ENCODE measurements at regions of chr17 and their contacts with region 1.

Region 1: GRCh38 chr17:29111816-29112499 is 68.2 kb downstream of the MYO18A start:
- DNase-seq: peak; percentile 62
- ATAC-seq: peak; percentile 85
- H3K4me3 Mint-ChIP-seq: no peak overlapping the region
- H3K27ac Mint-ChIP-seq: no peak overlapping the region
- H3K4me1 Mint-ChIP-seq: peaks cover 4% of the 10 kb centered on the region
- H3K27me3 Mint-ChIP-seq: no peaks in the 10 kb centered on the region
- CTCF ChIP-seq: peak; percentile 31

Region 2: GRCh38 chr17:28967221-28968140 is 144.5 kb before region 1 on chr17:
- CTCF ChIA-PET with region 1: interaction called, 149 read pairs
- POLR2A ChIA-PET with region 1: interaction called, 8 read pairs
- intact Hi-C with region 1: loop called (anchors 1 kb)
- DNase-seq: no peak
- ATAC-seq: no peak
- H3K4me3 Mint-ChIP-seq: no peak overlapping the region
- H3K27ac Mint-ChIP-seq: peak overlapping the region; percentile 68
- H3K4me1 Mint-ChIP-seq: peaks cover 8% of the 10 kb centered on the region
- H3K27me3 Mint-ChIP-seq: peaks cover 16% of the 10 kb centered on the region
- CTCF ChIP-seq: no peak

Region 3: GRCh38 chr17:30869005-30869404 is 1757.0 kb after region 1 on chr17:
- CTCF ChIA-PET with region 1: no interaction called
- POLR2A ChIA-PET with region 1: no interaction called
- intact Hi-C with region 1: no loop called
- DNase-seq: no peak
- ATAC-seq: no peak
- H3K4me3 Mint-ChIP-seq: no peak overlapping the region
- H3K27ac Mint-ChIP-seq: no peak overlapping the region
- H3K4me1 Mint-ChIP-seq: no peaks in the 10 kb centered on the region
- H3K27me3 Mint-ChIP-seq: no peaks in the 10 kb centered on the region
- CTCF ChIP-seq: no peak

Measured in activated B cell treated with CpG ODN at 0.5 μM for 24 hours (primary cell).